CD4-positive, alpha-beta T cell (primary cell): ENCODE measurements at regions of chr7 and their contacts with region 1.

Region 1: DNA sequence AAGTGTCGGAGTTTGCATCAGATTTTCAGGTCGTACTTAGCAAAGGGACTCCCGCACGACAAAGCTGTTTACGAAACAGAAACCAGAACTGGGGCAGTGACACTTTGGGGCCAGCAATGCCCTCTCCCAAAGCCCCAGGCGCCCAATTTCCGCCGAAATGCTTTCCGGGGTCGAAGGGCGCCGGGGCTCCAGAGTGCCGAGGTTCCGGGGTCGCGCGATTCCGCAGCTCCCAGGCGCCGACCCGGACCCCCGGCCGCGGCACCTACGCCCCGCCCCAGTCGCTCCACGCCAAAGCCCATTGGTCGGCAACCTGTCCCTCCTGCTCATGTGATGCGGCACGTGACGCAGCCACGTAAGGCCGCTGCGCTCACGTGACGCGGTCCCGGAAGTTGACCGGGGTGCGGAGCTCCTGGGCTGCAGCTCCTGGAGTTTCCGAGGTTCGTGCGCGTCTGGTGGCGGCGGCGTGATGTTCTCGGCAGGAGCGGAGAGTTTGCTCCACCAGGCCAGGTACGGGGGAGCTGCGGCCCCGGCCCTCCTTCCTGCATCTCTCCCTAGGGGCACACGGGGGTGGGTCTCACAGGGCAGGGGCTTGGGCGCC is at the start of gene AP5Z1:
- DNase-seq: peak; percentile 86 to 99 (median 93)
- ATAC-seq: peak; percentile 87
- H3K4me3 ChIP-seq: peak within 1 kb of the TSS; percentile 99
- H3K4me3 Mint-ChIP-seq: peak within 1 kb of the TSS; percentile 100
- H3K27ac ChIP-seq: peak within 1 kb of the TSS; percentile 96
- H3K27ac Mint-ChIP-seq: peak within 1 kb of the TSS; percentile 100
- H3K4me1 ChIP-seq: peaks cover 41% of the 10 kb centered on the region
- H3K4me1 Mint-ChIP-seq: peaks cover 49% of the 10 kb centered on the region
- H3K27me3 ChIP-seq: no peaks in the 10 kb centered on the region
- H3K27me3 Mint-ChIP-seq: no peaks in the 10 kb centered on the region
- CTCF ChIP-seq: no peak
- total RNA-seq, gene AP5Z1: 93.5 to 102 TPM

Region 2: DNA sequence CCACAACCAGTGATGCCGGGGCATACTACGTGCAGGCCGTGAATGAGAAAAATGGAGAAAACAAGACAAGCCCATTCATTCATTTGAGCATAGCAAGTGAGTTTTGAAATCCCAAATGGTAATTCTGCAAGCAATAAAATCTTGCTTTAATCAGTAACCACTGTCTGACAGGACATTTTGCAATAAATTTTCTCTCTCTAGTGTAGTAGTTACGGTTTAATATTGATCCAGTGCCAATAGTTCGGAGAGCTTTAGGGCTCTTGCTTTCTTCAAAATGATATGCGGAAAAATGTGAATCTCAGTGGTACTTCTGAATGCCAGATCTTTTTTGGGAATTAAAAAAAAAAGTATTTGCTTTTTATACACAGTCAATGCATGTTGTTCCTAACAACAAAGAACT is 953.9 kb before region 1 on chr7:
- CTCF ChIA-PET with region 1: no interaction called
- POLR2A ChIA-PET with region 1: no interaction called
- intact Hi-C with region 1: no loop called
- DNase-seq: no peak
- ATAC-seq: no peak
- H3K4me3 ChIP-seq: no peak overlapping the region
- H3K4me3 Mint-ChIP-seq: no peak overlapping the region
- H3K27ac ChIP-seq: no peak overlapping the region
- H3K27ac Mint-ChIP-seq: no peak overlapping the region
- H3K4me1 ChIP-seq: no peaks in the 10 kb centered on the region
- H3K4me1 Mint-ChIP-seq: no peaks in the 10 kb centered on the region
- H3K27me3 ChIP-seq: no peaks in the 10 kb centered on the region
- H3K27me3 Mint-ChIP-seq: no peaks in the 10 kb centered on the region
- CTCF ChIP-seq: no peak

Region 3: GRCh38 chr7:4519819-4520525 is 255.4 kb before region 1 on chr7:
- CTCF ChIA-PET with region 1: no interaction called
- POLR2A ChIA-PET with region 1: no interaction called
- intact Hi-C with region 1: no loop called
- DNase-seq: no peak
- ATAC-seq: no peak
- H3K4me3 ChIP-seq: no peak overlapping the region
- H3K4me3 Mint-ChIP-seq: no peak overlapping the region
- H3K27ac ChIP-seq: no peak overlapping the region
- H3K27ac Mint-ChIP-seq: no peak overlapping the region
- H3K4me1 ChIP-seq: no peaks in the 10 kb centered on the region
- H3K4me1 Mint-ChIP-seq: no peaks in the 10 kb centered on the region
- H3K27me3 ChIP-seq: peaks cover 0 to 2% of the 10 kb centered on the region in 2 experiments
- H3K27me3 Mint-ChIP-seq: peaks cover 48% of the 10 kb centered on the region
- CTCF ChIP-seq: no peak

Region 4: GRCh38 chr7:4681886-4682620 is 93.3 kb before region 1 on chr7 and contains the start of gene FOXK1:
- CTCF ChIA-PET with region 1: no interaction called
- POLR2A ChIA-PET with region 1: interaction called, 22 read pairs
- intact Hi-C with region 1: loop called in 1 of 2 experiments (anchors 1 kb)
- DNase-seq: peak; percentile 54 to 93 (median 79)
- ATAC-seq: peak; percentile 77
- H3K4me3 ChIP-seq: peak within 1 kb of the TSS; percentile 63
- H3K4me3 Mint-ChIP-seq: peak within 1 kb of the TSS; percentile 97
- H3K27ac ChIP-seq: peak within 1 kb of the TSS; percentile 88 to 94
- H3K27ac Mint-ChIP-seq: peak within 1 kb of the TSS; percentile 98
- H3K4me1 ChIP-seq: peaks cover 44% of the 10 kb centered on the region
- H3K4me1 Mint-ChIP-seq: peaks cover 33% of the 10 kb centered on the region
- H3K27me3 ChIP-seq: no peaks in the 10 kb centered on the region
- H3K27me3 Mint-ChIP-seq: no peaks in the 10 kb centered on the region
- CTCF ChIP-seq: no peak
- total RNA-seq, gene FOXK1: 67.8 to 68.1 TPM

Region 5: DNA sequence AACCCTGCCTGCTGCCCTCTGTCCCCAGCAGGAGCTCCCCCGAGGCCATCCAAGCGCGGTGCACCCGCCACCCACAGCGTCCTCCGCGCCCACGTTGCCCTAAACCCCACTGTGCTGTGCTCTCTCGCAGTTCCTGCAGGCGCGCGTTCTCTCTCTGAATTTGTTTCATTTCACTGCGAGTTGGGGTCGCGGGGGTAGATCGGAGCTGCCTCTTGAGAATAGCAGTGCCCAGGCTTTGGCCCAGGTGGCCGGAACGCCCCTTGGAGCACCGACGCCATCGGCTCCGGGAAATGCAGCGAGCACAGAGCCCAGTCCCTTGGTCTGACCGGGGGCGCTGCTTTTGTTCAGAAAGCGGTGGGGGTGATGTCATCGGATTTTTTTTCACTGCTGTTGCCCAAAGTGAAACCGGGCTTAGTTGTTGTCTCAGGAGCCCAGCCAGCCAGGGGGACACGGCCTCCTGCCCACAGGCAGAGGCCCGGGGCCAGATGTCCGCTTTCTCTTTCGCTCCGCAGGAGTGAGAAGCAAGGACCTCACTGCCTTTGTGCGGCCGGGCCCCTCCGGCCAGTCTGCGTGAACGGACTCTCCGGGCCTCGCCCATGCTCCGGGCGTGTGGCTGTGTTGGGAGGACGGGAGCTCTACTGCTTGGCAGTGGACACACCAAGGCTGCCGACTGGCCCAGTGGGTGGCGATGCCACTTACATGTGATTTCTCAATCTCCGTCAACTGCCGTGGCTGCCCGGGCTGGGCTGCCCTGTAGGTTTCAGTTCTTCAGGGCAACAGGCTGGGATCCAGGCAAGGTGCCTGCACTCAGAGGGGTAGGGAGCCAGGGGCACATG is 50.1 kb before region 1 on chr7:
- CTCF ChIA-PET with region 1: no interaction called
- POLR2A ChIA-PET with region 1: interaction called, 10 read pairs
- intact Hi-C with region 1: no loop called
- DNase-seq: peak in 10 of 14 experiments; percentile 22 to 77 (median 46)
- ATAC-seq: peak; percentile 83
- H3K4me3 ChIP-seq: peak overlapping the region; percentile 66
- H3K4me3 Mint-ChIP-seq: peak overlapping the region; percentile 93
- H3K27ac ChIP-seq: peak overlapping the region; percentile 48 to 54
- H3K27ac Mint-ChIP-seq: peak overlapping the region; percentile 94
- H3K4me1 ChIP-seq: peaks cover 31% of the 10 kb centered on the region
- H3K4me1 Mint-ChIP-seq: peaks cover 44% of the 10 kb centered on the region
- H3K27me3 ChIP-seq: no peaks in the 10 kb centered on the region
- H3K27me3 Mint-ChIP-seq: no peaks in the 10 kb centered on the region
- CTCF ChIP-seq: no peak

Region 6: DNA sequence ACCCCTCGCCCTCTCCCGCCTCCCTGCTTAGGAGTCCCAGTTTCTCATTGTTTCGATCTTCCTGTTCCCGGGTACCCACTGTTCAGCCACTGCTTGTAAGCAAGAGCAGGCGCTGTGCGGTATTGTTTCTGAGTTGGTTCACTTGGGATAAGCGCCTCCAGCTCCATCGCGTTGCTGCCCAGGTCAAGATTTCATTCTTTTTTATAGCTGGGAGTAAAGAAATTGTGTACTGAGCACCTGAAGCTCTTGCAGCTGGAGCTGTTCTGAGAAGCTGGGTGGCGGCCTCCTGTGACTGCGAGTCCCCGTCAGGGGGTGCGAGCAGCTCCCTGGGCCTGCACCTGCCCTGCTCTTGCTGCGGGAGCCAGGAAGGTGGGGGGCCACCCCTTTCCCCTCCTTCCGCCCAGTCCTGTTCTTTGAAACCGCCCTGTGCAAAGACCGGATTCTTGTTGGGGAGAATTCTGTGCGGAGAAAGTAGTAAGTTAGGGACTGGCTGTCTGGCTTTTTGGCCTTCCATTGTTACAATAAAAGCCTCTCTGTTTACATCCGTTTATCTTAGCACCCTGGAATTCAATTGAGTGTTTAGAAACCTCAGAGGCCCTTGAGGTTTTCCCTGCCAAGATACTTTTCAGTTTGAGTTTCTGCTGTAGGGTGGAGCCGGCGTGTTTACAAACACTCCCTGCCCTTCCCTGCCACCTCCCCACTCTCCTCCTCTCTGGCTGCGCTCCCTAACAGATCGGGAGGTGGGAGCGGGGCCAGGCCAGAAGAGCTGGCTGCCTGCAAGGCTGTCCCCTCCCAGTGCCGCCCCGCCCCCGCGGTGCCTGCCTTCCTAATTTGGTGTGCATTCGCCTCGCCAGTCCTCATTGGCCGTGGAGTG is 30.7 kb before region 1 on chr7:
- CTCF ChIA-PET with region 1: no interaction called
- POLR2A ChIA-PET with region 1: interaction called, 27 read pairs
- intact Hi-C with region 1: loop called in 1 of 2 experiments (anchors 2 kb)
- DNase-seq: peak; percentile 39 to 84 (median 73)
- ATAC-seq: peak; percentile 73
- H3K4me3 ChIP-seq: peak overlapping the region; percentile 58
- H3K4me3 Mint-ChIP-seq: peak overlapping the region; percentile 90
- H3K27ac ChIP-seq: peak overlapping the region; percentile 68 to 94
- H3K27ac Mint-ChIP-seq: peak overlapping the region; percentile 93
- H3K4me1 ChIP-seq: peaks cover 69% of the 10 kb centered on the region
- H3K4me1 Mint-ChIP-seq: peaks cover 81% of the 10 kb centered on the region
- H3K27me3 ChIP-seq: no peaks in the 10 kb centered on the region
- H3K27me3 Mint-ChIP-seq: no peaks in the 10 kb centered on the region
- CTCF ChIP-seq: no peak

Region 7: DNA sequence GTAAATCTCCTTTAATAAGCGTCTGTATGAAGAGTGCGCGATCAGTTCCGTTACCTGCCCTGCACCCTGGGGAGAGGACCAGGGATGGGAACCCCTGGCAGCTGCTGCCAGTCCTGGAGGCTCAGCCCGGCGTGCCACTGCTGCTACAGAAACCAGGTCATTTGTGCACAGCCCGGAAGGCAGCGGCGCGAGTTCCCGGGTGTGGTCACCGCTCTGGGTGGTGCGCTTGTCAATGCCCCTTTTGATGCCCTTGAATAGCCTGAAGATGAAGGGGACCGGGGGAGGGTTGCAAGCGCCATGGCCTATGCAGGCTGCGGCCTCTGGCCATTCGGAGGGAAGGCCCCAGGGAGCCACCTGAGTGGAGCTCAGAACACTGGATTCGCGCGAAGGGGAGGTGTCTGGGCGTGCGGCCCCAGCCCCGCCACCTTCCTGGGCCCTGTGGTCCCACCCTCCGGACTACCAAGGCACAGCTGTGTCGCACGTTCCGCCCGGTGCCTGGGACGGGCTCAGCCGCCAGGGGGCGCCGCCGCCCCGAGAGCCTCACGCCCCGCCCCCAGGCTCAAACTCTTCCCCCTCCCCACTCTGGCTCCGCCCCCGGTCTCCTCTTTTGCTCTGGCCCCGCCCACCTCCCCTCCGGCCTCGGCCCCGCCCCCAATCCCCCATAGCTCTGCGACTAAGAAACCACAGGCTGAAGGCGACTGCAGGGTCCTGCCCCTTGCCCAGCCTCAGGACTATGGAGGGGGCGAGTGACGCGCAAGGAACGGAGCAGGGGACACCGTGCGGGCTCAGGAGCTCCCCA is 16.6 kb after region 1 on chr7:
- CTCF ChIA-PET with region 1: interaction called, 23 read pairs
- POLR2A ChIA-PET with region 1: interaction called, 63 read pairs
- intact Hi-C with region 1: loop called in 1 of 2 experiments (anchors 2 kb)
- DNase-seq: peak; percentile 72 to 90 (median 80)
- ATAC-seq: peak; percentile 90
- H3K4me3 ChIP-seq: peak overlapping the region; percentile 52
- H3K4me3 Mint-ChIP-seq: peak overlapping the region; percentile 11
- H3K27ac ChIP-seq: no peak overlapping the region
- H3K27ac Mint-ChIP-seq: no peak overlapping the region
- H3K4me1 ChIP-seq: peaks cover 17% of the 10 kb centered on the region
- H3K4me1 Mint-ChIP-seq: no peaks in the 10 kb centered on the region
- H3K27me3 ChIP-seq: no peaks in the 10 kb centered on the region
- H3K27me3 Mint-ChIP-seq: no peaks in the 10 kb centered on the region
- CTCF ChIP-seq: peak; percentile 86

Region 8: GRCh38 chr7:4973728-4974198 is 198.4 kb after region 1 on chr7:
- CTCF ChIA-PET with region 1: interaction called, 3 read pairs
- POLR2A ChIA-PET with region 1: interaction called, 13 read pairs
- intact Hi-C with region 1: no loop called
- DNase-seq: peak; percentile 88 to 96 (median 93)
- ATAC-seq: peak; percentile 98
- H3K4me3 ChIP-seq: peak overlapping the region; percentile 65
- H3K4me3 Mint-ChIP-seq: peak overlapping the region; percentile 99
- H3K27ac ChIP-seq: peak overlapping the region; percentile 36 to 61
- H3K27ac Mint-ChIP-seq: peak overlapping the region; percentile 87
- H3K4me1 ChIP-seq: peaks cover 17% of the 10 kb centered on the region
- H3K4me1 Mint-ChIP-seq: peaks cover 31% of the 10 kb centered on the region
- H3K27me3 ChIP-seq: no peaks in the 10 kb centered on the region
- H3K27me3 Mint-ChIP-seq: no peaks in the 10 kb centered on the region
- CTCF ChIP-seq: peak; percentile 75

Region 9: DNA sequence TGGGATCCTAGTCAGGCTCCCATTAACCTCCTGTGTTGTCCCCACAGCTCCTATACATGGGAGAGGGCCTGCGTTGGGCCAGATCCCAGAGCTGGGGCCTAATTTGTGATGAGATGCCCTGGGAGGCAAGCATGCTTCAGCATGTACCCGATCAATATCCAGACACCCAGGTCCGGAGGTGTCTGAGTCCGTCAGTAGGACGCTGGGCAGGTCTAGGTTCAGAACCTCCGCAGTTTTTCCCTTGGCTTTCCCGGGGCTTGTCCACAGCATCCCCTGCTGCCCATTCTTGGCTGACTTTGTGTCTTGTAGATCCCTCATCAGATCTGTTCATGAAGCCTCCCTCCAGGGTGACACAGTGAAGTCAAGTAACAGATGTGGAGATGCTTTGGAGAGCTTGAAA is 237.6 kb after region 1 on chr7:
- CTCF ChIA-PET with region 1: no interaction called
- POLR2A ChIA-PET with region 1: no interaction called
- intact Hi-C with region 1: no loop called
- DNase-seq: no peak
- ATAC-seq: no peak
- H3K4me3 ChIP-seq: no peak overlapping the region
- H3K4me3 Mint-ChIP-seq: no peak overlapping the region
- H3K27ac ChIP-seq: no peak overlapping the region
- H3K27ac Mint-ChIP-seq: no peak overlapping the region
- H3K4me1 ChIP-seq: no peaks in the 10 kb centered on the region
- H3K4me1 Mint-ChIP-seq: no peaks in the 10 kb centered on the region
- H3K27me3 ChIP-seq: no peaks in the 10 kb centered on the region
- H3K27me3 Mint-ChIP-seq: no peaks in the 10 kb centered on the region
- CTCF ChIP-seq: no peak

Region 10: DNA sequence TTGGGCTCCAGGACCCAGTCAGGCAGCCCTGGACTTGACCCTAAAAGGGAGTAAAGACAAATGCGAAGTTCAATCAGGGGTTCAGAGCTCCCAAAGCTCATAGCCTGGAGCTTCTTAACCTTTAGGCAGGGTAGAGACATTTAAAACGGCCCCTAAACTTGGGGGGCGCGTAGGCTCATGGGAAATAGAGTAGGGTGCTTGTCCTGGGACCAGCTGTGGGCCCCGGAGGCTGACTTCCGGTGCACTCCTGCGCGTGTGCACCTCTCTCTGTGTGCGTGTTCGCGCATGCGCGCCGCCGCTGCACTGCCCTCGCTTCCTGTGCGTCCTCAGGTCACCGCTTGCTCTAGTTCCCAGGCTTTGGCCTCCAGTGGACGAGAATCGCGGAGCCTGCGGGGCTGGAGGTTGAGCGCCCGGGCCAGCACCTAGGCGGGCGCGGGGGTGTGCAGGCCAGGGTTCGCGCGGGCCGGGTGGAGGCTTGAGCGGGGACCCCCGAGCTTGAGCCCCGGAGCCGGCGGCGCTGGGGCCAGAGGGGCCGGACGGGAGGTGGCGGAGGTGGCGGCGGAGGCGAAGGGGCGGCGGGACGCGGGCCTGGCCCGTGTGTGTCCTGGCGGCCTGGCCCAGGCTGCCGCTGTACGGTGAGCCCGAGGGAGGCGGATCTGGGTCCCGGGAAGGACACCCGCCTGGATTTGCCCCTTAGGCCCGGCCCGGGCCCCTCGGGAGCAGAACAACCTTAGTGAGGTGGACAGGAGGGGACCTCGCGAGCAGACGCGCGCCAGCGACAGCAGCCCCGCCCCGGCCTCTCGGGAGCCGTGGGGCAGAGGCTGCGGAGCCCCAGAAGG is 270.4 kb after region 1 on chr7 and contains the start of gene RBAK:
- CTCF ChIA-PET with region 1: no interaction called
- POLR2A ChIA-PET with region 1: interaction called, 10 read pairs
- intact Hi-C with region 1: no loop called
- DNase-seq: peak; percentile 74 to 96 (median 87)
- ATAC-seq: peak; percentile 99
- H3K4me3 ChIP-seq: peak within 1 kb of the TSS; percentile 80
- H3K4me3 Mint-ChIP-seq: peak within 1 kb of the TSS; percentile 95
- H3K27ac ChIP-seq: peak within 1 kb of the TSS; percentile 9 to 68
- H3K27ac Mint-ChIP-seq: peak within 1 kb of the TSS; percentile 82
- H3K4me1 ChIP-seq: peaks cover 26% of the 10 kb centered on the region
- H3K4me1 Mint-ChIP-seq: peaks cover 44% of the 10 kb centered on the region
- H3K27me3 ChIP-seq: no peaks in the 10 kb centered on the region
- H3K27me3 Mint-ChIP-seq: no peaks in the 10 kb centered on the region
- CTCF ChIP-seq: no peak
- total RNA-seq, gene RBAK: 11.0 to 12.4 TPM